AG04450 (cell line): ENCODE measurements at regions of chr6 and their contacts with region 1.

Region 1: DNA sequence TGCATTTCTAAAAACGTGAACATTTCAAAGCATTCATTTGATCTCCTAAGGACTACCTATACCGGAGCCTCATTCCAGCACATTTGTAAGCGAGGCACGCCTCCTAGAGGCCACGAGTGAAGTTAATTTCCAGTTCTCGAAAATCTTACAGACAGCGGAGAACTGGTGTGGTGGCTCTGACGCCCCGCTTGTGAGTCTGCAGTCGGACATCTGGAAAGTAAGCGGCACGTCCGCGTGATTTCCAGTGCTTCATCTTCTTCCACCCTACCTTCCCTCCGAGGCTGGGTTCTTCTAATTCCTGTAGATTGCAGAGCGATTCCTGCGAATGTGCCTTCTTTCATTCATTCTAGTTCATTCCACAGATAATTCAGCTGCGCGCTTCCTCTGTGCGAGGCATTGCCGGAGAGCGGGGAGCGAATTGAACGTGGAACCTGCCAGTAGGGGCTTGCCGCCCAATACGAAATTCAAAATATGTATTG is 810 bp upstream of the PRIM2 start:
- DNase-seq: peak; percentile 85
- H3K4me3 ChIP-seq: peak overlapping the region; percentile 95
- H3K27ac ChIP-seq: peak overlapping the region; percentile 43
- H3K27me3 ChIP-seq: no peaks in the 10 kb centered on the region
- CTCF ChIP-seq: peak; percentile 79

Region 2: DNA sequence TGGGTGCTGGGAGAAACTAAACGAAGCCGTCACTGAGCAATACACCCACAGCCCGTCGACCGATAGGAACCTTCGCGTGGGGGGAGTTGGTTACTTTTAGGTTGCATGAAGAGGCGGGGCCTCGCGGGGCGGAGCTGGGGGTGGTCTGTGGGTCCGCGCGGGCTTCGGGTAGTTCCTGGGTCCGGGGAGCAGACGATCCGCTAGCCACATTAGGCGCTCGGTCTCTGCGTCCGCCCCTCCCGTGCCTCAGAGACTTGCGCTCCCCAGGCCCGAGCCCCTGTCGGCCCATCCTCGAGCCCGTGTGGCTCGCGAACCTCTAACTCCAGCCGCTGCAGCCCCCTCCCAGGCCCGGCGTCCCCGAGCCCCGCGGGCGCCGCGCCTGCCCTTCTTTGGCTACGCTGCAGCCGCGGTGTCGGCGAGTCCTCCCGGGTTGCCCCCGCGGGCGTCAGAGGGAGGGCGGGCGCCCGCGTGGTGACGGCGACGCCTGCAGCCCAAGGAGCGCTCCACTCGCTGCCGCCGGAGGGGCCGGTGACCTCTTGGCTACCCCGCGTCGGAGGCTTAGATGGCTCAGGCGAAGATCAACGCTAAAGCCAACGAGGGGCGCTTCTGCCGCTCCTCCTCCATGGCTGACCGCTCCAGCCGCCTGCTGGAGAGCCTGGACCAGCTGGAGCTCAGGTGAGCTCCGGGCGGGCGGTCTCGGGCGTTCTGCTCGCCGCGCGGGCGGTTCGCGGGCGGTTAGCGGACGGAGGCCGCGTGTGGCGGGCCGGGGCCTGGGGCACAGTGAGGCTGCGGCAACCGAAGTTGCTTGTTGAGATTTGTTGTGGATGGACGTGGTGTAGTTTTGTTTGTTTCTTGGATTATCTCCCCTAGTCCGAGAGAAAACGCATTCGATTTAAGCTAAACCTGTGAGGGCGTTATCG is 144.2 kb before region 1 on chr6 and contains the start of gene BAG2:
- CTCF ChIA-PET with region 1: interaction called, 12 read pairs
- POLR2A ChIA-PET with region 1: interaction called, 11 read pairs
- DNase-seq: peak; percentile 75
- H3K4me3 ChIP-seq: peak within 1 kb of the TSS; percentile 86
- H3K27ac ChIP-seq: peak within 1 kb of the TSS; percentile 85
- H3K27me3 ChIP-seq: no peaks in the 10 kb centered on the region
- CTCF ChIP-seq: peak; percentile 6
- polyA plus RNA-seq, gene BAG2: 29.0 and 43.4 TPM in 2 replicates

Region 3: DNA sequence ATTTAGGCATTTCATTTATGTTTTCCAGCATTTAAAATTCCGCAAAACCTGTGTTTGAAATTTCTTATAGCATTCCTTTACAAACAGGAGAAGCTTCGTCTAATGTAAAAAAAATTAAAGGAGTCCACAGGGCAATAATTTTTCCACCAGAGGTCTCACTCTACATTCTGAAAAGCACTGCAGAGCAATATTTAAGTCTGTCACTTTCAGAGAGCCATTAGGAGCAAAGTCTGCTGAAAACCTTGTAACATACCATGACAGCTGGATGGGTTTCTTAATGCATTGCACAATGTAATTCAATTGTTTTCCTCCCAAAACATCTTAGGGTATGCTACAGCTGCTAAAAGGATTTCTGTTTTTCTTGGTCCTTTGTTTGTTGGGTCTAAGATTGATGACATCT is 126.5 kb before region 1 on chr6:
- CTCF ChIA-PET with region 1: interaction called, 109 read pairs
- POLR2A ChIA-PET with region 1: interaction called, 6 read pairs
- DNase-seq: no peak
- H3K4me3 ChIP-seq: no peak overlapping the region
- H3K27ac ChIP-seq: no peak overlapping the region
- H3K27me3 ChIP-seq: no peaks in the 10 kb centered on the region
- CTCF ChIP-seq: peak; percentile 54

Region 4: GRCh38 chr6:57221936-57222742 is 94.5 kb before region 1 on chr6 and contains the start of gene RAB23:
- CTCF ChIA-PET with region 1: interaction called, 9 read pairs
- POLR2A ChIA-PET with region 1: interaction called, 26 read pairs
- DNase-seq: peak; percentile 63
- H3K4me3 ChIP-seq: peak within 1 kb of the TSS; percentile 86
- H3K27ac ChIP-seq: peak within 1 kb of the TSS; percentile 67
- H3K27me3 ChIP-seq: no peaks in the 10 kb centered on the region
- CTCF ChIP-seq: no peak
- polyA plus RNA-seq, gene RAB23: 45.2 and 62.1 TPM in 2 replicates

Region 5: GRCh38 chr6:57267586-57268293 is 48.9 kb before region 1 on chr6:
- CTCF ChIA-PET with region 1: interaction called, 73 read pairs
- POLR2A ChIA-PET with region 1: interaction called, 14 read pairs
- DNase-seq: peak; percentile 96
- H3K4me3 ChIP-seq: no peak overlapping the region
- H3K27ac ChIP-seq: peak overlapping the region; percentile 80
- H3K27me3 ChIP-seq: no peaks in the 10 kb centered on the region
- CTCF ChIP-seq: peak; percentile 57

Region 6: GRCh38 chr6:57342148-57342669 is 25.6 kb after region 1 on chr6:
- CTCF ChIA-PET with region 1: no interaction called
- POLR2A ChIA-PET with region 1: no interaction called
- DNase-seq: no peak
- H3K4me3 ChIP-seq: no peak overlapping the region
- H3K27ac ChIP-seq: no peak overlapping the region
- H3K27me3 ChIP-seq: no peaks in the 10 kb centered on the region
- CTCF ChIP-seq: no peak